ENCODE measurements at regions of chr2 and their contacts with region 1.

Region 1: GRCh38 chr2:46351750-46352138 is 54.5 kb downstream of the EPAS1 start:
- DNase-seq: peak; percentile 57 to 75
- ATAC-seq: peak; percentile 48 to 87 (median 62)
- H3K4me3 ChIP-seq: peak overlapping the region in 7 of 10 donors; percentile 1 to 36 (median 22)
- H3K27ac ChIP-seq: peak overlapping the region; percentile 61 to 84 (median 76)
- H3K4me1 ChIP-seq: peaks cover 34 to 100% (median 86%) of the 10 kb centered on the region in 9 donors
- H3K27me3 ChIP-seq: no peaks in the 10 kb centered on the region
- CTCF ChIP-seq: no peak

Region 2: GRCh38 chr2:46230115-46230571 is 121.6 kb before region 1 on chr2:
- intact Hi-C with region 1: loop called in 1 of 10 experiments (anchors 10 kb)
- DNase-seq: peak; percentile 23 to 51
- ATAC-seq: peak; percentile 74 to 91 (median 85)
- H3K4me3 ChIP-seq: no peak overlapping the region
- H3K27ac ChIP-seq: peak overlapping the region in 8 of 10 donors; percentile 4 to 61 (median 42)
- H3K4me1 ChIP-seq: peaks cover 3 to 35% (median 21%) of the 10 kb centered on the region in 9 donors
- H3K27me3 ChIP-seq: no peaks in the 10 kb centered on the region
- CTCF ChIP-seq: peak in 8 of 9 donors; percentile 10 to 57 (median 46)

Region 3: DNA sequence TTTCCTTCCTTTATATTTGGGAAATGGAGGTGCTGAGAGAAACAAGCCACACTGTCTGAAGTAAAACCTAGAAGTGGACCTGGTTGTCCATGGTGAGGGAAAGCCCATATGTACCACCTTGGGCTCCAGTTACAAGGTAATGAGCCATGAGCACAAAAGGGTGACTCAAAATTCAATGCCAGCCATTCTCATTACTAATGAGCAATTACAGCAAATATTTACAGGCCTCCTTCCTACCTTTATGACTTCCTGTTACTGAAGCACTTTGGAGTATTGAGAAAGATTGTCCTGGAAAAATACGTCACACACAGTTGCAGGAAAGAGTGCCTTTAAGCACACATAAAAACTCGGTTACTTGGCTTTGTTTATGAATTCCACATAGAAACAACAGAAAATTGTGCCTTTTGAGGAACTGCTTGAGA is 45.4 kb before region 1 on chr2:
- intact Hi-C with region 1: loop called in 4 of 10 experiments (anchors 2 to 5 kb)
- DNase-seq: no peak
- ATAC-seq: peak in 5 of 8 donors; percentile 11 to 51 (median 27)
- H3K4me3 ChIP-seq: peak overlapping the region in 2 of 10 donors; percentile 20 to 24
- H3K27ac ChIP-seq: peak overlapping the region; percentile 69 to 99 (median 81)
- H3K4me1 ChIP-seq: peaks cover 43 to 99% (median 96%) of the 10 kb centered on the region in 9 donors
- H3K27me3 ChIP-seq: no peaks in the 10 kb centered on the region
- CTCF ChIP-seq: no peak

Region 4: GRCh38 chr2:46315103-46315890 is 36.4 kb before region 1 on chr2:
- intact Hi-C with region 1: loop called in 2 of 10 experiments (anchors 5 kb)
- DNase-seq: peak; percentile 88 to 94
- ATAC-seq: peak; percentile 91 to 94 (median 92)
- H3K4me3 ChIP-seq: peak overlapping the region in 3 of 10 donors; percentile 4 to 12 (median 10)
- H3K27ac ChIP-seq: peak overlapping the region; percentile 49 to 99 (median 87)
- H3K4me1 ChIP-seq: peaks cover 52 to 100% (median 96%) of the 10 kb centered on the region in 9 donors
- H3K27me3 ChIP-seq: no peaks in the 10 kb centered on the region
- CTCF ChIP-seq: no peak

Measured in heart right ventricle (tissue), 16 donors.